Ascending aorta (tissue), 2 donors: ENCODE measurements at regions of chr19 and their contacts with region 1.

Region 1: DNA sequence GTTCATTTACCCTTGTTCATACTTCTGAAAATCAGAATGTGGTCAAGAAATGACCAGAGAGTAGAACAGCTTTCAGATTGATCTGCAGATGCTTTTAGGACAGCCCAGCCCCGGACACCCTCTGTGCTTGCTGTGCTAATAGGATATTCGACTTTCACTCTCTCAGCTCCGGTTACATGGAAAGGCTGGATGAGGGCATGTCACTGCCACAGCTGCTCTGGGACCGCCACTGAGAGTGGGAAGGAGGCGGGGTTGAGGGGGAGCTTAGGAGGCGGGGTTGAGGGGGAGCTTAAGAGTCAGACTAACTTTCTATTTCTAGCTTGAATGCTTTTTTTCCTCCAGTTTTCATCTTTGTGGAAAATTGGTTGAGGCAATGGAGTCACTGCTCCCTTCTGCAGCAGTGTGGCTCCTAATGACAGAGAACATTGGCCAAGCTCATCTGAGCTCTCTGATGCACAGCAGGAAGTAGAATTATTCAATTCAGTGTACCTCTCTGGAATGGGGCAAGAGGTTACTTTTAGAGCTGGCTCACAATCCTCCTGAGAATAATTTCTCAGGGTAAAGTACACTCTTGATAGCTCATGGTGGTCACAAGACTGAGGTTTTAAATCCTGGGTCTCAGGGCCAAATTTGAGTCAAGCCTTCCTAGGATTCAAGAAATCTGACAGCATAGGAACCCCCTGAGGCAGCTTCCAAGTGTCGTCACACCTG is 74.6 kb upstream of the NPAS1 start:
- DNase-seq: peak; percentile 28 to 87
- H3K4me3 ChIP-seq: peak overlapping the region in 1 of 2 donors; percentile 37
- H3K27ac ChIP-seq: peak overlapping the region; percentile 86 to 87
- H3K4me1 ChIP-seq: peaks cover 3 to 43% of the 10 kb centered on the region in 2 donors
- H3K27me3 ChIP-seq: no peaks in the 10 kb centered on the region
- CTCF ChIP-seq: no peak

Region 2: DNA sequence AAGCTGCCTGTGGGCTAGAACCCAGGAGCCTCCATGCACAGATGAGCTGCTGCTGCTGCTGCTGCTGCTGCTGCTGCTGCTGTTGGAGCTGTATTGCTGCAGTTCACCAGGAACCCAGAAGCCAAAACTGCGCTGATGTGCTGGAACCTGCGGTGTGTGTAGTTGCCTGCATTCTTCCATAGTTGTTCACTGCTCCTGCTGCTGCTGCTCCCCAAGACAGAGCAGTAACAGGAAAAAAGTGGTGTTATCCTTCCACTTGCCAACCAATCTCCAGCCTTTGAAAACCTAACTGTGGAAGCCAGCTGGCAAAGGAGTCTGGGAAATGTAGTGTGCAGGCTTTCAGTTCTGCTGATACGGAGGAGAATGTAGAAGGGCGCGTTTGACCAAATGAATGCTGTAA is 46.3 kb before region 1 on chr19:
- intact Hi-C with region 1: loop called (anchors 5 kb)
- DNase-seq: peak in 1 of 2 donors; percentile 74
- H3K4me3 ChIP-seq: peak overlapping the region in 1 of 2 donors; percentile 11
- H3K27ac ChIP-seq: no peak overlapping the region
- H3K4me1 ChIP-seq: peaks cover 0 to 28% of the 10 kb centered on the region in 2 donors
- H3K27me3 ChIP-seq: no peaks in the 10 kb centered on the region
- CTCF ChIP-seq: no peak

Region 3: GRCh38 chr19:46975925-46976782 is 31.1 kb after region 1 on chr19:
- intact Hi-C with region 1: loop called (anchors 2 kb)
- DNase-seq: peak; percentile 90 to 98
- H3K4me3 ChIP-seq: peak overlapping the region; percentile 17 to 24
- H3K27ac ChIP-seq: peak overlapping the region; percentile 89 to 91
- H3K4me1 ChIP-seq: peaks cover 32 to 67% of the 10 kb centered on the region in 2 donors
- H3K27me3 ChIP-seq: no peaks in the 10 kb centered on the region
- CTCF ChIP-seq: no peak

Region 4: DNA sequence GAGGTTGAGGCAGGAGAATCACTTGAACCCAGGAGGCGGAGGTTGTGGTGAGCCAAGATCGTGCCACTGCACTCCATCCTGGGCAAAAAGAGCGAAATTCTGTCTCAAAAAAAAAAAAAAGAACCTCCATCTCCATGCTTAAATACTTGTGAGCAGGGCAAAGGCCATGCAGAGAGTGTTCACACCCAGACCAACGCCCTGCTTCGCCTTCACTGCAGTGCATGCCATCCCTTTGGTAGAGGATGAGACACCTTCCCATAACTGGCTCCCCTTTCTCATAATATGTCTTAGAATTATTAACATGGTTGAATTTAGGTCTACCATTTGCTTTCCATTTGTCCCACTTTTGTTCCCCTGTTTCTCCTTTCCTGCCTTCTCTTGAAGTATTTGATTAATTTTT is 270.5 kb after region 1 on chr19:
- intact Hi-C with region 1: no loop called
- DNase-seq: no peak
- H3K4me3 ChIP-seq: no peak overlapping the region
- H3K27ac ChIP-seq: no peak overlapping the region
- H3K4me1 ChIP-seq: no peaks in the 10 kb centered on the region
- H3K27me3 ChIP-seq: no peaks in the 10 kb centered on the region
- CTCF ChIP-seq: no peak

Region 5: DNA sequence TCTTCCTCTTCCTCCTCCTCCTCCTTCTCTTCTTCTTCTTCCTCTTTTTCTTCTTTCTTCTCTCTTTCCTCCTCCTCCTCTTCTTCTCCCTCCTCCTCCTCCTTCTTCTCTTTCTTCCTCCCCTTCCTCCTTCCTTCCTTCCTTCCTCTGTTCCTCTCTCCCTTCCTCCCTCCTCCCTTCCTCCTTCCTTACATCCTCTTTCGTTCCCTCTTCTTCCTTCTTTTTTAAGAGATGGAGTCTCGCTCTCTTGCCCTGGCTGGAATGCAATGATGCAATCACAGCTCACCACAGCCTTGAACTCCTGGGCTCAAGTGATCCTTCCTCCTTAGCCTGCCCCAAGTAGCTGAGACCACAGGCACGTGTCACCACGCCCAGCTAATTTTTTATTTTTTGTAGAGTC is 781.4 kb after region 1 on chr19:
- intact Hi-C with region 1: no loop called
- DNase-seq: no peak
- H3K4me3 ChIP-seq: no peak overlapping the region
- H3K27ac ChIP-seq: peak overlapping the region; percentile 89 to 95
- H3K4me1 ChIP-seq: peaks cover 11 to 47% of the 10 kb centered on the region in 2 donors
- H3K27me3 ChIP-seq: no peaks in the 10 kb centered on the region
- CTCF ChIP-seq: no peak